Gastrocnemius medialis (tissue), 4 donors: ENCODE measurements at regions of chr11 and their contacts with region 1.

Region 1: GRCh38 chr11:10307442-10308207 is 2.8 kb downstream of the ADM start:
- DNase-seq: peak; percentile 83 to 88
- ATAC-seq: peak; percentile 33 to 41
- H3K4me3 ChIP-seq: peak overlapping the region; percentile 77 to 92 (median 88)
- H3K27ac ChIP-seq: peak overlapping the region; percentile 85 to 93 (median 89)
- H3K4me1 ChIP-seq: peaks cover 46 to 60% of the 10 kb centered on the region in 2 donors
- H3K27me3 ChIP-seq: peaks cover 0 to 5% (median 0%) of the 10 kb centered on the region in 3 donors
- CTCF ChIP-seq: peak; percentile 100
- POLR2A ChIP-seq: peak; percentile 29 to 41

Region 2: DNA sequence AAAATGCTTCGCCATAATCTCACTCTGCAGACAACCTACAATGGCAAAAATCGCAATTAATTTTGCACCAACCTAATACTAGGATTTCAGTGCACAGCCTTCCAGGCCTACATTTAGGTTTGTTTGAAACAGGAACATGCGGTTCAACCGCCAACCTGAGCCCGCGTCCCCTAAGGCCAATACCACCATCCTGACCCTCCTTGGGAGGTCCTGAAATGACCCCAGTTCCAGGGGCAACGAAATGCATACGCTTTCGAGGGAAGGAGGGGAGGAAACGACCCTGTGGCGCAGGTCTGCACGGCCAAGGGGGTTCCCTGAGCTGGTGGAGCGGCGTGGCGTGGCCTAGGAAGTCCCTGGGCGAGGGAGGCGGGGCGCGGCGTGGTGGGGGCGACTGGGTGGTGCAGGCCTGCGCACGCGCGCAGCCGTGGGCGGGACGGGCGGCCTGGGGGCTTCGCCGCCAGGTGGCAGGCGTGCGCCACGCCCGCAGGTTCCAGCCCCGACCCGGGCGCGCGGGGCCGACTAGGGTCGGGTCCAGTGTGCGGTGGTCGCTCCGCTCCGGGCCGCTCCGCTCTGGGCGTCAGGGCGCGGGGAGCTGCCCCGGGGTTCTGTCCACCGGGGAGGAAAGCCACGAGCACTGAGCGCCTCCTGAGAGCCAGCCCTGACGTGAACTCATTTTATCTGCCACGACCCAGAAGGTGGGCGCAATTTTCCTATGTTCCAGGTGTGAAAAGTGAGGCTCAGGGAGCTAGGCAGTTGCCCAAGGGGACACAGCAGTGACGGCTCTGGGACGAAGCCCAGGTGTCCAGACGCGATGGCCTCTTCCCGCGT is 549.6 kb before region 1 on chr11:
- in situ Hi-C with region 1: loop called in 3 of 4 experiments (anchors 10 to 25 kb)
- intact Hi-C with region 1: loop called (anchors 1 kb)
- DNase-seq: peak; percentile 67 to 73
- ATAC-seq: peak; percentile 51 to 70
- H3K4me3 ChIP-seq: peak overlapping the region; percentile 61 to 86 (median 69)
- H3K27ac ChIP-seq: peak overlapping the region; percentile 76 to 86 (median 83)
- H3K4me1 ChIP-seq: peaks cover 18 to 25% of the 10 kb centered on the region in 2 donors
- H3K27me3 ChIP-seq: no peaks in the 10 kb centered on the region
- CTCF ChIP-seq: peak in 4 of 5 experiments; percentile 96 to 98 (median 98)
- POLR2A ChIP-seq: peak; percentile 52 to 53

Region 3: GRCh38 chr11:9972989-9973388 is 334.6 kb before region 1 on chr11:
- in situ Hi-C with region 1: loop called in 3 of 4 experiments (anchors 25 kb)
- intact Hi-C with region 1: loop called (anchors 5 kb)
- DNase-seq: no peak
- ATAC-seq: peak; percentile 57 to 73
- H3K4me3 ChIP-seq: no peak overlapping the region
- H3K27ac ChIP-seq: no peak overlapping the region
- H3K4me1 ChIP-seq: peaks cover 15 to 17% of the 10 kb centered on the region in 2 donors
- H3K27me3 ChIP-seq: no peaks in the 10 kb centered on the region
- CTCF ChIP-seq: peak; percentile 43 to 65 (median 61)
- POLR2A ChIP-seq: no peak

Region 4: GRCh38 chr11:10208131-10208575 is 99.5 kb before region 1 on chr11:
- in situ Hi-C with region 1: loop called in 2 of 4 experiments (anchors 5 to 25 kb)
- intact Hi-C with region 1: loop called (anchors 1 kb)
- DNase-seq: no peak
- ATAC-seq: peak; percentile 61 to 87
- H3K4me3 ChIP-seq: no peak overlapping the region
- H3K27ac ChIP-seq: peak overlapping the region in 1 of 4 donors; percentile 9
- H3K4me1 ChIP-seq: peaks cover 0 to 7% of the 10 kb centered on the region in 2 donors
- H3K27me3 ChIP-seq: no peaks in the 10 kb centered on the region
- CTCF ChIP-seq: peak; percentile 68 to 80 (median 79)
- POLR2A ChIP-seq: no peak

Region 5: GRCh38 chr11:10263929-10264328 is 43.7 kb before region 1 on chr11:
- in situ Hi-C with region 1: no loop called
- intact Hi-C with region 1: no loop called
- DNase-seq: no peak
- ATAC-seq: no peak
- H3K4me3 ChIP-seq: no peak overlapping the region
- H3K27ac ChIP-seq: no peak overlapping the region
- H3K4me1 ChIP-seq: no peaks in the 10 kb centered on the region
- H3K27me3 ChIP-seq: no peaks in the 10 kb centered on the region
- CTCF ChIP-seq: no peak
- POLR2A ChIP-seq: no peak

Region 6: GRCh38 chr11:10366568-10367370 is 59.1 kb after region 1 on chr11:
- in situ Hi-C with region 1: loop called in 1 of 4 experiments (anchors 10 kb)
- intact Hi-C with region 1: loop called (anchors 5 kb)
- DNase-seq: peak; percentile 72 to 84
- ATAC-seq: peak; percentile 93 to 94
- H3K4me3 ChIP-seq: peak overlapping the region in 1 of 4 donors; percentile 11
- H3K27ac ChIP-seq: peak overlapping the region; percentile 64 to 83 (median 69)
- H3K4me1 ChIP-seq: peaks cover 11 to 21% of the 10 kb centered on the region in 2 donors
- H3K27me3 ChIP-seq: no peaks in the 10 kb centered on the region
- CTCF ChIP-seq: peak; percentile 60 to 91 (median 83)
- POLR2A ChIP-seq: no peak